CD4-positive, alpha-beta T cell (primary cell): ENCODE measurements at regions of chr5 and their contacts with region 1.

Region 1: GRCh38 chr5:95261437-95262175 is 23.3 kb downstream of the MCTP1 start:
- DNase-seq: peak in 3 of 14 experiments; percentile 29 to 54 (median 44)
- ATAC-seq: no peak
- H3K4me3 ChIP-seq: no peak overlapping the region
- H3K4me3 Mint-ChIP-seq: no peak overlapping the region
- H3K27ac ChIP-seq: no peak overlapping the region
- H3K27ac Mint-ChIP-seq: no peak overlapping the region
- H3K4me1 ChIP-seq: no peaks in the 10 kb centered on the region
- H3K4me1 Mint-ChIP-seq: no peaks in the 10 kb centered on the region
- H3K27me3 ChIP-seq: no peaks in the 10 kb centered on the region
- H3K27me3 Mint-ChIP-seq: peaks cover 26% of the 10 kb centered on the region
- CTCF ChIP-seq: peak; percentile 7

Region 2: DNA sequence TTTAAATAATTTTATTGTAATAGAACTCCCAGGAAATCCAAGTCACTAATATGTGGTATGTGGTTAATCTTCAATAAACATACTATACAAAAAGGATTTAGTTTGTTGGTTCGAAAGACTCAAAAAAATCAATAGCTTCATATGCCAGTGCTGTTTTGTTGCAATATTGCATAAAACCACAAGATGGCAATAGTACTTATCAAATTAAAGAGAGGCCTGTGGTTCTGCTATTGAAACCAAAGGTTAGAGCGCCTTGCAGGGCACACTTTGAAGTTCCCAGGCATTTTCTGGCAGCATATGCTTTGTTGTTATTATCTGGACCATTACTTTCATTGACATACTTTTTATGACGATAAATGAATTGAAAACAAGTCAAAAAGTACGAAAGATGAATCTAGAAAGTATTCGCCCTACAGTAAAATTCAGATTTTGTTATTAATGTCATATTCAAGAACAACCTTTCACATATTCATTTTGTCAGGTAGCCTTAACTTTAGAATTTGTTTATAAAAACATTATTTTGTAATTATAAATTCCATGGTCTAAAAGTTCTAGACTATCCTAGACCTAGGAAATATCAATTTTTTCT is 293.0 kb before region 1 on chr5:
- CTCF ChIA-PET with region 1: no interaction called
- POLR2A ChIA-PET with region 1: no interaction called
- intact Hi-C with region 1: loop called (anchors 2 kb)
- DNase-seq: peak in 3 of 14 experiments; percentile 43 to 55 (median 54)
- ATAC-seq: no peak
- H3K4me3 ChIP-seq: no peak overlapping the region
- H3K4me3 Mint-ChIP-seq: no peak overlapping the region
- H3K27ac ChIP-seq: no peak overlapping the region
- H3K27ac Mint-ChIP-seq: no peak overlapping the region
- H3K4me1 ChIP-seq: no peaks in the 10 kb centered on the region
- H3K4me1 Mint-ChIP-seq: no peaks in the 10 kb centered on the region
- H3K27me3 ChIP-seq: no peaks in the 10 kb centered on the region
- H3K27me3 Mint-ChIP-seq: no peaks in the 10 kb centered on the region
- CTCF ChIP-seq: peak; percentile 80

Region 3: DNA sequence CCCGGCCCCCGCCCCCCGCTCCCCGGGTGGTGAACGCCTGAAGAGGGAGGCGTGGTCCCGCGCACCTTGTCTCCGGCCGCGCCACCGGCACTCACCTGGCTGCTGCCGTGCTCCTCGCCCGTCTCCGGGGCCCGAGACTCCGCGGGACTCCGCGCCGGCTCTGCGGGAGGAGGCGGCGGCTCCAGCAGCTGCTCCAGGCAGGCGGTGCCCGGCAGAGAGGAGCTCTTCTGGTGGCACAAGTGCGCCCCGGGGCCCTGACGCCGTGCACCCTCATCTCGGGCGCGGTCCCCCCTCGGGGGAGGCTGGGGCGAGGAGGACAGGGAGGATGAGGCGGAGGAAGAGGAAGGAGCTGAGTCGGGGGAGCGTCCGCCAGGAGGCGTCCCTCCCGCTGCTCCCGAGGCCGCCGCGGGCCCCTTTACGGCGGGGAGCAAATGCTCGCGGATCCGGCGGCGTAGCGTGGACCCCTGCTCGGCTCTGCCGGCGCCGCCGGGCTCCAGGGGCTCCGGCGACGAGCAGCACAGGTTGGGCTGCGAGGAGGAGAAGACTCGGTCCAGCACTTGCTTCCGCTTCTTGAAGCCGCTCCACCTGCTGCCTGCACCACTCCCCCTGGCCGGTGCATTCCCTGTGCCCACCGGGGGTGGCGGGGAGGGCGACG is 22.3 kb after region 1 on chr5:
- CTCF ChIA-PET with region 1: no interaction called
- POLR2A ChIA-PET with region 1: no interaction called
- intact Hi-C with region 1: no loop called
- DNase-seq: peak in 3 of 14 experiments; percentile 0 to 30 (median 23)
- ATAC-seq: no peak
- H3K4me3 ChIP-seq: peak overlapping the region; percentile 33
- H3K4me3 Mint-ChIP-seq: no peak overlapping the region
- H3K27ac ChIP-seq: no peak overlapping the region
- H3K27ac Mint-ChIP-seq: no peak overlapping the region
- H3K4me1 ChIP-seq: peaks cover 12% of the 10 kb centered on the region
- H3K4me1 Mint-ChIP-seq: peaks cover 14% of the 10 kb centered on the region
- H3K27me3 ChIP-seq: peaks cover 31 to 75% of the 10 kb centered on the region in 2 experiments
- H3K27me3 Mint-ChIP-seq: peaks cover 75% of the 10 kb centered on the region
- CTCF ChIP-seq: no peak

Region 4: GRCh38 chr5:96312383-96312782 is 1050.8 kb after region 1 on chr5:
- CTCF ChIA-PET with region 1: no interaction called
- POLR2A ChIA-PET with region 1: no interaction called
- intact Hi-C with region 1: no loop called
- DNase-seq: no peak
- ATAC-seq: no peak
- H3K4me3 ChIP-seq: no peak overlapping the region
- H3K4me3 Mint-ChIP-seq: no peak overlapping the region
- H3K27ac ChIP-seq: no peak overlapping the region
- H3K27ac Mint-ChIP-seq: no peak overlapping the region
- H3K4me1 ChIP-seq: no peaks in the 10 kb centered on the region
- H3K4me1 Mint-ChIP-seq: no peaks in the 10 kb centered on the region
- H3K27me3 ChIP-seq: peaks cover 0 to 6% of the 10 kb centered on the region in 2 experiments
- H3K27me3 Mint-ChIP-seq: peaks cover 48% of the 10 kb centered on the region
- CTCF ChIP-seq: no peak